ENCODE measurements at regions of chr7 and their contacts with region 1.

Region 1: GRCh38 chr7:50679218-50680007 is 103.3 kb downstream of the GRB10 start:
- DNase-seq: peak; percentile 53
- H3K27ac ChIP-seq: no peak overlapping the region
- CTCF ChIP-seq: peak; percentile 45

Region 2: GRCh38 chr7:50467817-50468610 is 211.4 kb before region 1 on chr7:
- CTCF ChIA-PET with region 1: interaction called, 17 read pairs
- POLR2A ChIA-PET with region 1: no interaction called
- DNase-seq: peak; percentile 78
- H3K27ac ChIP-seq: no peak overlapping the region
- CTCF ChIP-seq: peak; percentile 96

Measured in RWPE1 (cell line).